Caco-2 (cell line): ENCODE measurements at regions of chr7 and their contacts with region 1.

Region 1: GRCh38 chr7:11557627-11558026 is 274.4 kb downstream of the THSD7A start:
- DNase-seq: peak; percentile 61 to 65
- H3K4me3 ChIP-seq: no peak overlapping the region
- H3K4me3 Mint-ChIP-seq: no peak overlapping the region
- H3K27ac Mint-ChIP-seq: no peak overlapping the region
- H3K4me1 ChIP-seq: no peaks in the 10 kb centered on the region
- H3K4me1 Mint-ChIP-seq: no peaks in the 10 kb centered on the region
- H3K27me3 ChIP-seq: no peaks in the 10 kb centered on the region
- H3K27me3 Mint-ChIP-seq: no peaks in the 10 kb centered on the region
- CTCF ChIP-seq: peak; percentile 45 to 62

Region 2: DNA sequence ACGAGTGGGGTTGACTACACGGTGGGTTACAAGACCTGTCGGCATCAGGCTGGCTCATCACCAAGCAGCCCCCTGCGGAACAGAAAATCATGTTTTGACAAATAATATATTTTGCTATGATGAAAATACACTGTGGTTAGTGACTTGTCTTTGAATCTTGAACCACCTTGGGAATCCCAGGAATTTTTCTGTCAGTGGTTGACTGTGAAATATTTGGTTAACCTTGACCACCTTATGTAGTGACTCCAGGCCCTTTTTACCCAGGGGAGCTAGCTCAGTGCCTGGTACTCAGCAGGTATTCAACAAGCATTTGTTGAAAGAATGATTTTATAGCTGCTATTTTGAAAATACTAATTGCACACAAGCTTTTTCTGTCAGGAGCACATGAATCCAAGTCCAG is 178.0 kb before region 1 on chr7:
- CTCF ChIA-PET with region 1: no interaction called
- POLR2A ChIA-PET with region 1: no interaction called
- intact Hi-C with region 1: no loop called
- DNase-seq: no peak
- H3K4me3 ChIP-seq: no peak overlapping the region
- H3K4me3 Mint-ChIP-seq: no peak overlapping the region
- H3K27ac Mint-ChIP-seq: no peak overlapping the region
- H3K4me1 ChIP-seq: no peaks in the 10 kb centered on the region
- H3K4me1 Mint-ChIP-seq: no peaks in the 10 kb centered on the region
- H3K27me3 ChIP-seq: no peaks in the 10 kb centered on the region; the same call in 1 of the 2 replicates
- H3K27me3 Mint-ChIP-seq: no peaks in the 10 kb centered on the region
- CTCF ChIP-seq: no peak

Region 3: DNA sequence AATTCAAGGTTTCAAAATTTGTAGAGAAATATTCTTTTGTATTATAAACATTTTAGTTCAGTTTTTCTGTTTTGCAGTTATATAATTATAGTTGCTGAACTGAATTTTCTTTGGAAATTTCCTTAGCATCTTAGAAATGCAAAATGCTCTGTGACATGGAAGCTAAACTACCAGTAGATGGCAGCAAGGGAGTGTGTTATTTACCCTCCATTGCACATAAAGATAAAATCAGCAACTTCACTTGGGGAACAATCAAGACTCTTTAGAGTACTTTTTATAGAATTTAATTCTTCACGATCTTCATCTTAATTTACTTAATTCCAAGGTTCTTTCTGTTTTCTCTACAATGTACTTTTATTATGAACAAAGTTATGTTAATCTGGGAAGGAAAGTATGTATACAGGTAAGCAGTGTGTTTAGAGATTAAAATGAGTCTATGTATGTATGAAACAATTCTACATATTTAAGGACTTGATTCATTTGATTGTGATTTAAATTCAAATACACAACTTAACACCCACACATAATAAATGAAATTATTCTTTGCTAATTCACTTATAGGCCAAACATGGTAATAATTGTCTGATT is 129.8 kb before region 1 on chr7:
- CTCF ChIA-PET with region 1: no interaction called
- POLR2A ChIA-PET with region 1: no interaction called
- intact Hi-C with region 1: loop called (anchors 1 kb)
- DNase-seq: peak in 1 of 2 experiments; percentile 24
- H3K4me3 ChIP-seq: no peak overlapping the region
- H3K4me3 Mint-ChIP-seq: no peak overlapping the region
- H3K27ac Mint-ChIP-seq: no peak overlapping the region
- H3K4me1 ChIP-seq: no peaks in the 10 kb centered on the region
- H3K4me1 Mint-ChIP-seq: no peaks in the 10 kb centered on the region
- H3K27me3 ChIP-seq: no peaks in the 10 kb centered on the region
- H3K27me3 Mint-ChIP-seq: no peaks in the 10 kb centered on the region
- CTCF ChIP-seq: peak; percentile 72 to 78